ENCODE measurements at regions of chr10 and their contacts with region 1.

Region 1: DNA sequence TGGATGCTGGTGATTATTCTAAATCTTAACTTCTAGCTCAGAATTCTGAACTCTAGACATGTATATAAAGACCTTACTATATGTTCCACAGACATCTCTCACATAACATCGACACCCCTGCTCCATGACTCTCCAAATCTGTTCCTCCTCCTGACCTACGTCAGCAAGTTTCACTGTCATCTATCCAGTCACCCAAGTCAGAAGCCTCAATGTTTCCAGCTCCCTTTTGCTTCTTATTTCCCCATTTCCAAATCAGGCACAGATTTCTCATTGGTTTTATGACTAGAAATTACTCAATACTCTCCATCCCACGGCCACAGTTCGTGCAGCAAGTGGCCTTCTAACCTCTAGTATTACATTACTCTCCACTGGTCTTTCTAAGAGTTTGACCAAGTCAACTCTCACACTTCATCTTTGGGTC is 28.5 kb downstream of the EPC1 start:
- DNase-seq: no peak
- ATAC-seq: peak; percentile 50
- H3K4me3 Mint-ChIP-seq: peak overlapping the region; percentile 50
- H3K27ac Mint-ChIP-seq: peak overlapping the region; percentile 76
- H3K4me1 Mint-ChIP-seq: peaks cover 90% of the 10 kb centered on the region
- H3K27me3 Mint-ChIP-seq: no peaks in the 10 kb centered on the region
- CTCF ChIP-seq: no peak

Region 2: GRCh38 chr10:32279795-32280194 is 38.7 kb before region 1 on chr10:
- CTCF ChIA-PET with region 1: no interaction called
- POLR2A ChIA-PET with region 1: no interaction called
- intact Hi-C with region 1: loop called (anchors 5 kb)
- DNase-seq: no peak
- ATAC-seq: no peak
- H3K4me3 Mint-ChIP-seq: no peak overlapping the region
- H3K27ac Mint-ChIP-seq: no peak overlapping the region
- H3K4me1 Mint-ChIP-seq: peaks cover under 1% of the 10 kb centered on the region
- H3K27me3 Mint-ChIP-seq: no peaks in the 10 kb centered on the region
- CTCF ChIP-seq: no peak

Region 3: DNA sequence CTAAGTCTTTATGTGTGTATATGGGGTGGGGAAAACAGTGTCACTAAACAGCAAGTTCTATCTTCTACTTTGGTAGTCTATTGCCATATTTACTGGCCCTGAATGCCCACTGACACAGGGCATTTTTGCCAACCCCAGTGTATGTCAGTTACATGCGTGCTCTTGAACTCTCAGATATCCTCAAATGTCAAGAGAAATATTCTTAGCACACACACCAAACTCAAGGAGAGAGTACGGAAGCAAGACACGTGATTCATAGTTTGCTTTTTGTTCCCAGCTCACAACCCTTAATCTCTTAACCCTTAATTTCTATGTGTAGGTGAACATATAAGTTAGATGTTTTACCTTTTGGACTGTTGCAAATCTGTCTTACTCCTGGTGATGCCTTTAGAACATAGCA is 10.9 kb before region 1 on chr10:
- CTCF ChIA-PET with region 1: no interaction called
- POLR2A ChIA-PET with region 1: interaction called, 4 read pairs
- intact Hi-C with region 1: loop called (anchors 2 kb)
- DNase-seq: no peak
- ATAC-seq: no peak
- H3K4me3 Mint-ChIP-seq: no peak overlapping the region
- H3K27ac Mint-ChIP-seq: peak overlapping the region; percentile 43
- H3K4me1 Mint-ChIP-seq: peaks cover 51% of the 10 kb centered on the region
- H3K27me3 Mint-ChIP-seq: no peaks in the 10 kb centered on the region
- CTCF ChIP-seq: no peak

Region 4: DNA sequence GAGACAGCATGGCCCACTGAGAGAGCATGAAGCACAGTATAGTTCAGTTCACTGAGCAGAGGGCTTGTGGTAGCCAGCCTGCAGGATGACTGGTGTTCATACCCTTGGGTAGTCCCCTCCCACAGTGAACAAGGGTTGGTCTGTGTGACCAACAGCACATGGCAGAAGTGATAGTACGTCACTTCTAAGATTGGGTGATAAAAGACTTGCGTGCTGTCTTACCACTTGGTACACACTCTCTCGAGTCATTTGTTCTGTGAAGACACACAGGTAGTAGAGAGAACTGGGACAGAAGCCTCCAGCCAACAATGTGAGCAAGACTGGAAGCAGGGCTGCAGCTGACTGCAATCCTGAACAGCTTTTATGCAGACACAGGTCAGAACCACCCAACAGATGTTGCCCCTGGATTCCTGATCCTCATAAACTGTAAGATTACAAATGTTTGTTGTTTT is 13.8 kb after region 1 on chr10:
- CTCF ChIA-PET with region 1: interaction called, 4 read pairs
- POLR2A ChIA-PET with region 1: interaction called, 3 read pairs
- intact Hi-C with region 1: loop called (anchors 1 kb)
- DNase-seq: peak; percentile 25
- ATAC-seq: peak; percentile 100
- H3K4me3 Mint-ChIP-seq: peak overlapping the region; percentile 42
- H3K27ac Mint-ChIP-seq: peak overlapping the region; percentile 85
- H3K4me1 Mint-ChIP-seq: peaks cover 96% of the 10 kb centered on the region
- H3K27me3 Mint-ChIP-seq: no peaks in the 10 kb centered on the region
- CTCF ChIP-seq: no peak

Region 5: GRCh38 chr10:32378363-32379317 is 60.2 kb after region 1 on chr10:
- CTCF ChIA-PET with region 1: no interaction called
- POLR2A ChIA-PET with region 1: no interaction called
- intact Hi-C with region 1: loop called (anchors 2 kb)
- DNase-seq: peak; percentile 73
- ATAC-seq: peak; percentile 94
- H3K4me3 Mint-ChIP-seq: no peak overlapping the region
- H3K27ac Mint-ChIP-seq: no peak overlapping the region
- H3K4me1 Mint-ChIP-seq: peaks cover 21% of the 10 kb centered on the region
- H3K27me3 Mint-ChIP-seq: no peaks in the 10 kb centered on the region
- CTCF ChIP-seq: no peak

Region 6: DNA sequence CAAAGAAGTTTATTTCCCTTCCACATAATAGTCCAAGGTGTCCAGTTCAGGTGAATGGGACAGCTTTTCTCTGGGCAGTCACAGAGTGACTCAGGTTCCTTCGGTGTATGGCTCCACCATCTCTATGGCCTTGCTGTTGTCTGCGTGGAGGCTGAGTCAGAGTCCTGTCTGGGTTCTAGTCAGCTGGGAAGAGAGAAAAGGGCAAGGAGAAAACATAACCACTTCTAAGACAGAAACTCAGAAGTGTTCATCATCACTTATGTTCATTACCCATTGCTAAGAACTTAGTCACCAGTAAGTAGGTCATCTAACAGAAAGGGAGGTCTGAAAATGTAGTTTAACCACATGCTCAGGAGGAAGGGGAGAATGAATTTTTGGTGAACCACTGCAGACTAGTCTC is 95.0 kb after region 1 on chr10:
- CTCF ChIA-PET with region 1: no interaction called
- POLR2A ChIA-PET with region 1: no interaction called
- intact Hi-C with region 1: no loop called
- DNase-seq: no peak
- ATAC-seq: no peak
- H3K4me3 Mint-ChIP-seq: no peak overlapping the region
- H3K27ac Mint-ChIP-seq: no peak overlapping the region
- H3K4me1 Mint-ChIP-seq: no peaks in the 10 kb centered on the region
- H3K27me3 Mint-ChIP-seq: peaks cover 9% of the 10 kb centered on the region
- CTCF ChIP-seq: no peak

Measured in activated B cell treated with CpG ODN at 0.5 μM for 24 hours (primary cell).